ENCODE measurements at regions of chr16 and their contacts with region 1.

Region 1: GRCh38 chr16:19555162-19555937 is at the start of gene VPS35L:
- DNase-seq: peak; percentile 93
- H3K4me3 Mint-ChIP-seq: peak within 1 kb of the TSS; percentile 91
- H3K27ac Mint-ChIP-seq: peak within 1 kb of the TSS; percentile 89
- H3K4me1 Mint-ChIP-seq: peaks cover 17% of the 10 kb centered on the region
- H3K27me3 Mint-ChIP-seq: no peaks in the 10 kb centered on the region
- total RNA-seq, gene VPS35L: 30.3 to 32.4 TPM

Region 2: GRCh38 chr16:19583665-19584300 is 28.4 kb after region 1 on chr16:
- CTCF ChIA-PET with region 1: interaction called, 17 read pairs
- intact Hi-C with region 1: no loop called
- DNase-seq: peak; percentile 43
- H3K4me3 Mint-ChIP-seq: no peak overlapping the region
- H3K27ac Mint-ChIP-seq: no peak overlapping the region
- H3K4me1 Mint-ChIP-seq: peaks cover 15% of the 10 kb centered on the region
- H3K27me3 Mint-ChIP-seq: no peaks in the 10 kb centered on the region

Region 3: GRCh38 chr16:19601083-19601976 is 46.0 kb after region 1 on chr16:
- CTCF ChIA-PET with region 1: interaction called, 3 read pairs
- intact Hi-C with region 1: loop called (anchors 1 kb)
- DNase-seq: peak; percentile 55
- H3K4me3 Mint-ChIP-seq: no peak overlapping the region
- H3K27ac Mint-ChIP-seq: no peak overlapping the region
- H3K4me1 Mint-ChIP-seq: no peaks in the 10 kb centered on the region
- H3K27me3 Mint-ChIP-seq: no peaks in the 10 kb centered on the region

Region 4: DNA sequence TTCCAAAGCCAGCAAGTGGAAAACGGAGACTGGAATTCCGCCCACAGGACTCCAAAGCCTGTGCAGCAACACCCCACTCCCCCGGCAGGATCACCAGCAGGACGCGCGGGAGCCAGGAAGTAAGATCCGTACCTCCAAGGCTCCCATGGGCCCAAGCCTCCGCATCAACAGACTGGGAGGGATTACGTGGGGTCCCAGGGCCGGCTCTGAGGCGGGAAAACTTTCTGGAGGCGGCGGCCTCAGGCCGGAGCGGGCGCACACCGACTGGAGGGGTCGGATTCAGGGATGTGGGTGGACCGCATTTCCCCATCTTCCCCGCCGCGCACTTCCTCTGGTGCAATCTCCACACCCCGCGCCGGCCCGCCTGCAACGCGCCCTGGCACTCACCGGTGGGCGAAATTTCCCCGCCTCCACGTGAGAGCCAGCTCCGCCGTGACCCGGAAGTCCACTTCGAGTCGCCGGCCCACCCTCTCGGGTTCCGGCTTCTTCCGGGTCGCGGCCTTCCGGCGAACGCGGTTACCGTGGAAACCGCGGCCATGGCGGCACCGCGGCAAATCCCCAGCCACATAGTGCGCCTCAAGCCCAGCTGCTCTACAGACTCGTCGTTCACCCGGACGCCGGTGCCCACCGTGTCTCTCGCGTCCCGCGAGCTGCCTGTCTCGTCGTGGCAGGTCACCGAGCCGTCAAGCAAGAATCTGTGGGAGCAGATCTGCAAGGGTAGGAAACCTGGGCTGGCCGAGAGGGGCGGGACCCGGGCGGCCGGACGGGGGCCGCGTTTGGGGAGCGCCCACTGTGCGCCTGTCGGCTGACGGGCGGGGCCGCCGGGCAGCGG is 162.6 kb after region 1 on chr16 and contains the starts of genes IQCK and KNOP1:
- CTCF ChIA-PET with region 1: interaction called, 3 read pairs
- intact Hi-C with region 1: loop called (anchors 1 kb)
- DNase-seq: peak; percentile 89
- H3K4me3 Mint-ChIP-seq: peak within 1 kb of the TSS; percentile 91
- H3K27ac Mint-ChIP-seq: peak within 1 kb of the TSS; percentile 78
- H3K4me1 Mint-ChIP-seq: peaks cover 45% of the 10 kb centered on the region
- H3K27me3 Mint-ChIP-seq: no peaks in the 10 kb centered on the region
- total RNA-seq, gene IQCK: 2.8 to 3.9 TPM
- total RNA-seq, gene KNOP1: 24.4 to 26.1 TPM

Region 5: GRCh38 chr16:19745286-19746010 is 190.1 kb after region 1 on chr16:
- CTCF ChIA-PET with region 1: no interaction called
- intact Hi-C with region 1: no loop called
- DNase-seq: no peak
- H3K4me3 Mint-ChIP-seq: no peak overlapping the region
- H3K27ac Mint-ChIP-seq: no peak overlapping the region
- H3K4me1 Mint-ChIP-seq: no peaks in the 10 kb centered on the region
- H3K27me3 Mint-ChIP-seq: no peaks in the 10 kb centered on the region

Region 6: GRCh38 chr16:19771796-19772195 is 216.4 kb after region 1 on chr16:
- CTCF ChIA-PET with region 1: no interaction called
- intact Hi-C with region 1: no loop called
- DNase-seq: no peak
- H3K4me3 Mint-ChIP-seq: no peak overlapping the region
- H3K27ac Mint-ChIP-seq: no peak overlapping the region
- H3K4me1 Mint-ChIP-seq: no peaks in the 10 kb centered on the region
- H3K27me3 Mint-ChIP-seq: no peaks in the 10 kb centered on the region

Measured in activated naive CD4-positive, alpha-beta T cell treated with anti-CD3 and anti-CD28 coated beads for 36 hours (primary cell).